ENCODE measurements at regions of chr3 and their contacts with region 1.

Region 1: GRCh38 chr3:129490242-129491045 is 38.0 kb upstream of the RHO start:
- DNase-seq: peak; percentile 94
- H3K4me3 ChIP-seq: no peak overlapping the region
- H3K27ac ChIP-seq: peak overlapping the region; percentile 69 to 89 (median 74)
- H3K4me1 ChIP-seq: peaks cover 0 to 23% (median 9%) of the 10 kb centered on the region in 4 donors
- H3K27me3 ChIP-seq: no peaks in the 10 kb centered on the region
- CTCF ChIP-seq: peak; percentile 31 to 80 (median 75)
- EP300 ChIP-seq: peak in 1 of 4 donors; percentile 73
- POLR2A ChIP-seq: no peak

Region 2: GRCh38 chr3:129606636-129607390 is 116.4 kb after region 1 on chr3 and contains the start of gene PLXND1:
- intact Hi-C with region 1: loop called (anchors 5 kb)
- DNase-seq: peak; percentile 88
- H3K4me3 ChIP-seq: peak within 1 kb of the TSS; percentile 51 to 68 (median 58)
- H3K27ac ChIP-seq: peak within 1 kb of the TSS; percentile 82 to 84 (median 82)
- H3K4me1 ChIP-seq: peaks cover 0 to 53% (median 43%) of the 10 kb centered on the region in 4 donors
- H3K27me3 ChIP-seq: peaks cover 0 to 18% (median 0%) of the 10 kb centered on the region in 3 donors
- CTCF ChIP-seq: no peak
- EP300 ChIP-seq: no peak
- POLR2A ChIP-seq: peak in 1 of 2 donors; percentile 51
- total RNA-seq, gene PLXND1: 36.9 to 77.0 (median 61.8) TPM

Region 3: DNA sequence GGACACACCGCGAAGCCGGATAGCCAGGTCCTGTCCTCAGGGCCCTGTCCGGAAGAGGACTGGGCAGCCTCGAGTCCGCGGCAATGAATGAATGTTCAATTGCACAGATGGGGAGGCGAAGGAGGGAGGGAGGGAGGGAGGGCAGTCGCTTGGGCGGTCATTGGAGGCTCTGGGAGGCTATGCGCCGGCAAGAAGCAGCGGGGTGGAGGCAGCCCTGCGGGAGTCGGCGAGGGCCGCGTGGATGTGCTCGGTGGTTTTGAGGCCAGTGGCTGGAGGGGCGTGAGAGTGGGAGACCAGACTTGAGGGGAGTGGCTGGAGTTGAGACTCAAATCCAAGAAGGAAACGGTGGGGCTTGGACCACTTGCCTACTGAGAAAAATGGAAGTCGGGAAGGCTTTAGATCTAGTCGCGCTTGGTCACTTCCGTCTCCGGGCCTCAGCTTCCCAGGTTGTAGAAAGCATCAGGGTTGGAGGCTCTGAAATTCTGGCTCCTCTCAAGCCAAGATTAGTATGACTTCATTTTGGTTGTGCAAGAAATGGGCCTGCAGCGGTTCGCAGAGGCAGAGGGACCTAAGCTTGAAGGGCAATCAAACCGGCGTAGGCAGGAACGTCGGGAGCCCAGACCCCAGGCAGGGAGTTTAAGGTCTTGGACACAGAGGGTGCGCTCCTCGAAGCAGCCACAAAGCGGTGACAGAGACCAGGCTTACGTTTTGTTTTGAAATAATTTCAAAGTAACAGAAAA is 137.2 kb after region 1 on chr3:
- intact Hi-C with region 1: loop called (anchors 2 kb)
- DNase-seq: peak; percentile 87
- H3K4me3 ChIP-seq: peak overlapping the region; percentile 58 to 75 (median 62)
- H3K27ac ChIP-seq: peak overlapping the region; percentile 95 to 99 (median 96)
- H3K4me1 ChIP-seq: peaks cover 0 to 46% (median 43%) of the 10 kb centered on the region in 4 donors
- H3K27me3 ChIP-seq: no peaks in the 10 kb centered on the region
- CTCF ChIP-seq: peak; percentile 54 to 86 (median 72)
- EP300 ChIP-seq: no peak
- POLR2A ChIP-seq: no peak

Region 4: GRCh38 chr3:129824926-129825541 is 334.6 kb after region 1 on chr3:
- intact Hi-C with region 1: loop called (anchors 2 kb)
- DNase-seq: no peak
- H3K4me3 ChIP-seq: no peak overlapping the region
- H3K27ac ChIP-seq: no peak overlapping the region
- H3K4me1 ChIP-seq: peaks cover 0 to 11% (median 4%) of the 10 kb centered on the region in 4 donors
- H3K27me3 ChIP-seq: no peaks in the 10 kb centered on the region
- CTCF ChIP-seq: peak in 3 of 4 experiments; percentile 62 to 69 (median 63)
- EP300 ChIP-seq: no peak
- POLR2A ChIP-seq: no peak

Measured in sigmoid colon (tissue), 7 donors.